SK-N-SH (cell line): ENCODE measurements at regions of chr7 and their contacts with region 1.

Region 1: DNA sequence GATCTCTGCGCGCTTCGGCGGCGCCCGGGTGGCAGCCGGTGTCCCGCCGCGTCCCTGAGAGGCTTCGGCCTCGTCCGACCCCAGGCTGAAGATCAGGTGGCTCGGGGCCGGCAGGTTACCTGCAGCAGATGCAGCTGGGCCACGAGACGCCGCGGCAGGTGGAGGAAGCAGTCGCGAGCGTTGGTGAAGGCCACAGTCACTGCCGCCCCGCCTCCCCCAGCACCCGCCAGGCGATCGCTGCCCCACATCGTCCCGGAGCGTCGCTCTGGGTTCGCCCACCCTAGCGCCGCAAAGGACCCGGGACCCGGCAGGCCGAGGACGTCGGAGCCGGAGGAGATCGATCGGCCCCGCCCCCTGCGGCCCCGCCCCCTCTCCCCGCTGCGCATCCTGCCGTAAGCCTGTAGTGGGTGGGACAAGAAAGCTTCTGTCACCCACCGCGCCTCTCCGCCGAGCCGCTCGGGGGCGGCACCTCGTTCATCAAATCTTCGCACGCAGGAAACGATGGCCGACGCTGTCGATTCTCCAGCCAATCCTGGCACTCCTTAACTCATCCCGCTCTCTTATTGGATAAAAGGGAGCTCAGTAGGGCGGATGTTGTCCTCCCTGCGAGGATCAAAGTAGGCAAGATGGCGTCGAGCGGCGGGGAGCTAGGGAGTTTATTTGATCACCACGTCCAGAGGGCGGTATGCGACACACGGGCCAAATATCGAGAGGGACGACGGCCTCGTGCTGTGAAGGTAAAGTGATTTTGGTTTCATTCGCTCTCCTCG is at the starts of genes PEX1 and RBM48:
- DNase-seq: peak; percentile 98
- H3K4me3 ChIP-seq: peak within 1 kb of the TSS; percentile 94 to 100
- H3K27ac ChIP-seq: peak within 1 kb of the TSS; percentile 65 to 94
- H3K4me1 ChIP-seq: peaks cover 5 to 13% of the 10 kb centered on the region in 2 experiments; a peak in 2 of 4 replicates
- H3K27me3 ChIP-seq: no peaks in the 10 kb centered on the region
- CTCF ChIP-seq: peak; percentile 65
- EP300 ChIP-seq: no peak
- RAD21 ChIP-seq: no peak
- polyA plus RNA-seq, gene PEX1: 16.0 and 24.9 TPM in 2 replicates
- polyA plus RNA-seq, gene RBM48: 4.7 and 6.4 TPM in 2 replicates

Region 2: GRCh38 chr7:92504563-92504962 is 23.8 kb before region 1 on chr7:
- CTCF ChIA-PET with region 1: no interaction called
- POLR2A ChIA-PET with region 1: no interaction called
- DNase-seq: no peak
- H3K4me3 ChIP-seq: no peak overlapping the region
- H3K27ac ChIP-seq: no peak overlapping the region
- H3K4me1 ChIP-seq: no peaks in the 10 kb centered on the region
- H3K27me3 ChIP-seq: no peaks in the 10 kb centered on the region
- CTCF ChIP-seq: no peak
- EP300 ChIP-seq: no peak
- RAD21 ChIP-seq: no peak

Region 3: DNA sequence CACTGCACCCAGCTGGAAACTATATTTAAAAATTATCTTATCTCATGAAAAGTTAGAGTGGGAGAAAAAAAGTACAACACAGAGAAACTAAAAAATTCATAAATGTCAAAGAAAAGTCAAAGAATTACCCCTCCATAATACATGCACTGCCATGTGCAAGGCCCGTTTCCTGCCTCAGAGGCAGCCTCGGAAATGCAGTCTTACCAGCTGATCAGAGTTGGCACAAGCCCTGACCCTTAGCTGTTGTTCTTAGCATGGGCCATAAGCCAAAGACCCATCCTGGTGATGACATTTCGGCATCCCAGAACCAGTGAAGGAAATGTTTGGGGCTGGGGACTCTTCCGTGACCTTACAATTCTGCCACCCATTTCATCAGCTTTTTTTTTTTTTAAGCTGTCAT is 21.8 kb after region 1 on chr7:
- CTCF ChIA-PET with region 1: interaction called, 10 read pairs
- POLR2A ChIA-PET with region 1: no interaction called
- DNase-seq: no peak
- H3K4me3 ChIP-seq: no peak overlapping the region
- H3K27ac ChIP-seq: no peak overlapping the region
- H3K4me1 ChIP-seq: 0 out of 4 replicates have a peak, but pooled peaks cover 0 to 5% of the 10 kb centered on the region in 2 experiments
- H3K27me3 ChIP-seq: no peaks in the 10 kb centered on the region
- CTCF ChIP-seq: no peak
- EP300 ChIP-seq: no peak
- RAD21 ChIP-seq: no peak

Region 4: DNA sequence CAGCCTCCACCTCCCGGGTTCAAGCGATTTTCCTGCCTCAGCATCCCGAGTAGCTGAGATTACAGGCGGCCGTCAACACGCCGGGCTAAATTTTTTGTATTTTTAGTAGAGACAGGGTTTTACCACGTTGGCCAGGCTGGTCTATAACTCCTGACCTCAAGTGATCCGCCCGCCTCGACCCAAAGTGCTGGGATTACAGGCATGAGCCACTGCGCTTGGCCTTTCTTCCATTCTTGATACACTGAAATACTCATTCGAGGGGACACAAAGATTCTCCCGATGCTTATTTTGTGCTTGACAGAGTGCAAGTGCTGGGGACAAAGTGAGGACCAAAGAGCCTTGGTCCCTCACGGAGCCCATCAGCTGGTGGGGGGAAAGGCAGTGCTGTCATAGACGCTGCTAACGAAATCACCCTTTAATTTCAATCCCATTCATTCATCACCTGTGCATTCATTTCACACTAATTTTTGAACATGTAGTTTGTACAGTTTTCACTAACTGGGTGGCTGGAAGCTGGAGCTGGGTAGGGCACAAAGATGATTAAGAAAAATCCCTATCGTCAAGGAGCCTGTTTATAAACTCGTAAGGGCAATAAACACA is 62.4 kb after region 1 on chr7:
- CTCF ChIA-PET with region 1: interaction called, 8 read pairs
- POLR2A ChIA-PET with region 1: interaction called, 12 read pairs
- DNase-seq: no peak
- H3K4me3 ChIP-seq: peak overlapping the region; percentile 82 to 90
- H3K27ac ChIP-seq: no peak overlapping the region
- H3K4me1 ChIP-seq: peaks cover 14 to 21% of the 10 kb centered on the region in 2 experiments; a peak in 3 of 4 replicates
- H3K27me3 ChIP-seq: no peaks in the 10 kb centered on the region
- CTCF ChIP-seq: no peak
- EP300 ChIP-seq: no peak
- RAD21 ChIP-seq: no peak

Region 5: GRCh38 chr7:93178212-93178611 is 649.8 kb after region 1 on chr7:
- CTCF ChIA-PET with region 1: no interaction called
- POLR2A ChIA-PET with region 1: no interaction called
- DNase-seq: peak; percentile 3
- H3K4me3 ChIP-seq: no peak overlapping the region
- H3K27ac ChIP-seq: no peak overlapping the region
- H3K4me1 ChIP-seq: no peaks in the 10 kb centered on the region
- H3K27me3 ChIP-seq: peaks cover 31% of the 10 kb centered on the region
- CTCF ChIP-seq: peak; percentile 51
- EP300 ChIP-seq: no peak
- RAD21 ChIP-seq: peak; percentile 68